ENCODE measurements at regions of chr10 and their contacts with region 1.

Region 1: DNA sequence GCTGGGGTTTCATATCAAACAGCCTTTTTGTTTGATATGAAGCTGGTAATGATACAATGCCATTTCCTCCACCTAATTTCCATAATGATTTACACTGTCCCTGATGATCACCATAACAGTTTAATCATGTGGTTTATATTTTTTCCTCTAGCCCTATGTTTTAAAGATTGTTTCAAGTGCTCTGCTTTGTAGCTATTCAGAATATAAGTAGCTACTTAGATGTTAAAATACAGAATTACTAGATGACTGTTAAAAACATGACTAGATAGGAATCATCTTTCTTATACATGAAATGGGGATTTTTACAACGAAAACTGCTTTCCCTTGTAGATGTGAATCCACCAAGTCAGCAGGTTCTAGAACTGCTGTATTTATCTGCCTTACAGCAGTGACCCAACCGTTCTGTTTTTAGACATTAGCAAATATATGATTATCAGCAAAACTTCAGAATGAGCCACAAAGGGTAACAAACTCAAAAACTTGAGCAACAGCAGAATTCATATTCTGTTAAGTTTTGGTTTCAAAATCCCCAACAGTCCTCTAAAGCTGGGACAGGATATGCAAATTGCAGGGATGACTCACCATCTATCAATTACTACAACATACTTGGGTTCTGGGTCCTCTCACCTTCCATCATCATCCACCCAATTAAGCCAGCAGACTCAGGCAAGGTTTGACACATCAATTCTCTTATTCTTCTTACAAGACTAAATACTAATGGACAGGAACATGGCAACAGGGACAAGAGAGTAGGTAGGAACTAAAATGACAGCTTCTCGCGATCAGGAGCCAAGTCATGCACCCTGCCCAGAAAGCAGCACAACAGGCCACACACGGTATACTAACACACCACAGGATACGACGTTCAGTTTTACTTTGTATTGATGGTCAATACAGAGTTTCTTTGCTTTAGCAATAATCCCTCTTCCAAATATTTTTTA is 83.9 kb downstream of the PIP4K2A start:
- DNase-seq: peak; percentile 84
- H3K4me3 Mint-ChIP-seq: peak overlapping the region; percentile 76
- H3K27ac Mint-ChIP-seq: peak overlapping the region; percentile 95
- H3K4me1 Mint-ChIP-seq: peaks cover 79% of the 10 kb centered on the region
- H3K27me3 Mint-ChIP-seq: no peaks in the 10 kb centered on the region

Region 2: DNA sequence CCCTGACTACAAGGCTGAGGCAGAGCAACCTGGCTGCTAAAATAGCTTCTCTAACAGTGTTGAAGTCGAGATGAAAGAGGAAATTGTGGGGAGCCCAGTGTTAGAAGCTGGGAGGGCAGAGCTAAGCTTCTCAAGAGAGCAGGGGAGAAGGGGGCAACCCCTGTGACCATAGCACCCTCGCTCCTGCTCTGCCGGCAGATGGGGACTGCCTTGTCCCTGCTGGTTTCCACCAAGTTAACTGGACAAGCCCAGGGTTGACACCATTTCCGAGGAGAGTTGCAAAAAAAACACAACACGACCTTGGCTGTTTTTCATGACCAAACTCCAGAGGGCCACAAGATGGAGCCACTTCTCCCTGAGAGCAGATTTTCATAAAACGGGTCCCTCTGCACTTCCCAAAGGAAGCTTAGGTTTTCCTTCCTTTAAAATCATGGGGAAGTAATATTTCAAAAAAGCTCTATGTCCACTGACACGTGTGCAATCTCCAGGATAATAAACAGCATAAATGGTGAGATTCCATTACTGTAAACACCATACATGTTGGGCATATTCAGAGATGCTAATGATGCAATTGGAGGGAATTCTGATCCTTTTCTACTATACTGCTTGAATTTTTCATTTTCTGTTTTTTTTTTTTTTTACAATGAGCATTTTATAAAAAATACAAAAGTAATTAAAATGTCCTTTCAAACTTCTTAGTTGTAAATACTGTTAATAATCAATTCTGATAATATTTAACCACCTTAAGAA is 56.5 kb before region 1 on chr10:
- intact Hi-C with region 1: loop called (anchors 1 kb)
- DNase-seq: no peak
- H3K4me3 Mint-ChIP-seq: no peak overlapping the region
- H3K27ac Mint-ChIP-seq: no peak overlapping the region
- H3K4me1 Mint-ChIP-seq: peaks cover 36% of the 10 kb centered on the region
- H3K27me3 Mint-ChIP-seq: no peaks in the 10 kb centered on the region

Region 3: DNA sequence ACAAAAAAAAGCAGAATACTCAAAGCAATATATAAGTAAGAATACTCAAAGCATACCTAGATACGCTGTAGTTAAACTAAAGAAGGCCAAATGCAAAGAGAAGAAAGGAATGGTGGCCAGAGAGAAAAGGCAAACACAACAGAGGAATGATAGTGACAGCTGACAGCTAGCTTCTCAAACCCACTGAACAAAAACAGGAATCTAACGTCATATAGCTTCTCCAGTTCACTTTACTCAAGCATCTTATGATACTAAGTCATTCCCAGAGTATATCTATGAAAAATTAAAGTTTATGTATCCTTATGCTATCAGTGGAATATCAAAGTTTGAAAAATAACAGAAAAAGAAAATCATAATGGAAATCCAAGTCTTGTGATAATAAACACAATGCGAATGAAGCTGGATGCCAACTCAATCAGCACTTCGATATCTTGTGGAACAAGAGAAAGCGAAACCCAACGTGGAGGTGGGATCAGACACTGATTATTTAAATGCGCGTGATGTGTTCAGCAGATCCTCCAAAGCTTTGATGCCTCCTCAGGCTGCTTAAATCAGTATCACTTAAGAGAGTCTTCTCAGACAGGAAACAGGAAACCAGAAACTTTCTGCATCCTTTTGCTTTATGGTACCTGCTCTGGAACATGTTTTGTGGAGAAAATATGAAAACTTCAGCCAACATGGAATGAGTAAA is 18.9 kb before region 1 on chr10:
- intact Hi-C with region 1: loop called (anchors 1 kb)
- DNase-seq: peak; percentile 92
- H3K4me3 Mint-ChIP-seq: peak overlapping the region; percentile 63
- H3K27ac Mint-ChIP-seq: peak overlapping the region; percentile 64
- H3K4me1 Mint-ChIP-seq: peaks cover 66% of the 10 kb centered on the region
- H3K27me3 Mint-ChIP-seq: no peaks in the 10 kb centered on the region

Region 4: DNA sequence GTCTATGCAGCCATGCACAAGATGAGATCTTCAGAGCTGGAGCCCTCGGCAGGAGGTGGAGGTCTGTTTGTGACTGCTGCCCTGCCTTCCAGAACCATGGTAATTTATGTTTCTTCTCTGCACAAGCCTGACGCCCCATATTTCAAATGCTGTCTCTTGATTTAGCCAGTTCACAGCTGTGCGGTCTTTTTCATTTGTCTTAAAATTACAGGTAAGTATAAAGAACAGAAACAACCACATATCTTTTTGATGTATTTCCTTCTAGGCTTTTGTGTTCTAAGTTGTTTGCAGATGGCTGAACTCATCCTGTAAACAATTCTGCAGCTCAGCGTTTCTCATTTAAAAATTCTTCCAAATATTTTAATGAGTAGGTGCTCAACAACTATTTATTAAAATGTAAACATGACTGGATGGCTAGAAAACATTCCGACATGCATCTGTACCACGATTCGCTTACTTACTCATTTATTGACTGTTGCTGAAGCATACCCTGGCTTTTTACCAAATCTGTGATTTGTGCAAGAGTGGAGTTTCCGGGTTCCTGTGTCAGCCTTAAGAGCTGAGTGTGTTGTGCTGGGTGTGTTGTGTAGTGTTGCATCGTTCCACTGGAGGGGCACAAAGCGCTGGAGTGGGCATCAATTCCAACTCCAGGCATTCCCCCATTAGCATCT is 24.9 kb after region 1 on chr10:
- intact Hi-C with region 1: loop called (anchors 1 kb)
- DNase-seq: peak; percentile 80
- H3K4me3 Mint-ChIP-seq: peak overlapping the region; percentile 64
- H3K27ac Mint-ChIP-seq: peak overlapping the region; percentile 90
- H3K4me1 Mint-ChIP-seq: peaks cover 88% of the 10 kb centered on the region
- H3K27me3 Mint-ChIP-seq: no peaks in the 10 kb centered on the region

Region 5: DNA sequence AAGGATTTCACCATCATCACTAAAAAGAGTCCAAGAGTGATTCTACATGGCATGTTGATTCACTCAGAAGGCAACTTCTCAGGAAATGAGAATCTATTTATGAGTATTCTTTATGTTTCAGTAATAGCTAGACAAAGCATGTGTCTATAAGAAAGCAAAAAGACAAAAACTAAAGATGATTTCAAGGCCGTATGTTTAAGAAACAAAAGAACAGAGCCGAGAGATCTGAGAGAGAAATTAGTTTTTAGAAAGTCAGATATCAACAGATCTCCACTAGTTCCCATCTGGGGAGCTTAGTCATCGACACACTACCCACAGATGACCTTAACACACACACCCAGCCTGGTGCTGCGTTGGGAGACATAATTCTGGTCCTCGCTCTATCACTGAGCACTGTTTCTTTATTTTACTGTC is 62.9 kb after region 1 on chr10:
- intact Hi-C with region 1: loop called (anchors 1 kb)
- DNase-seq: no peak
- H3K4me3 Mint-ChIP-seq: peak overlapping the region; percentile 52
- H3K27ac Mint-ChIP-seq: peak overlapping the region; percentile 89
- H3K4me1 Mint-ChIP-seq: peaks cover 44% of the 10 kb centered on the region
- H3K27me3 Mint-ChIP-seq: no peaks in the 10 kb centered on the region

Measured in activated CD4-positive, alpha-beta T cell treated with anti-CD3 and anti-CD28 coated beads, Interleukin-2, amount 10 ng/mL, durations not matched to agents 24 days and 14 days (primary cell).